ENCODE measurements at regions of chr2 and their contacts with region 1.

Region 1: DNA sequence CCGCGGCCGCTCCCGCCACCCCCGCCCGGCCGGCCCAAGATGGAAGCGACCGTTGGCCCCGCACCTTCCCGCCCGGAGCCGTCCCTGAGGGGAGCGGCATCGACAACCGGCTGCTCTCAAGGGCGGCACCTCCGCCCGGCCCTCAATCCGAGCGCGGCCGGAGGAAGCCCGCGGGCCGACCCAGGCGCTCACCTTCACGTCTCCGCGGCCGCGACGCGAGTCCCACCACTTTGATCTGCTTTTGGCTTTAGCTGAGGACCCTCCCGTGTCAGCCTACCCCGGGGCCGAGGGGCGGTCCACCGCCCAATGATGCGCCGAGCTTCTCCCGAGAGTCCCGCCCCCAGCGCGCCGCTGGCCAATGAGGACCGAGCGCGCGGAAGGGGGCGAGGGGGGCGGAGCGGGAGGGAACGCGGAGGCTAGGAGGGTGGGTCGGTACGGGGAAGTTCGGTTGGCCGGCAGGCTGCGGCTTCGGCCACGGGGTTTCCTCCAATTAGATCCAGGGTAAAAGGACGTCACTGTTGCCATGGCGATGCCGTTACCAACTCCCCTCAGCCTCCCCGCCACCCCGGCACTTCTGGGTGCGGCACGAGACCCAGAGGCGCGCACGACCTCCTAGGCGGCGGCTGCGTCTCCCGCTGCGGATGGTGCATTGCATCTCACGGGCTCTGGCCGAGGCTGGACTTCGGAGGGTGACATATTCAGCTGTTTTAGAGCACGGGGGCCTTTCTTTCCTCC is at the start of gene YWHAQ:
- DNase-seq: peak; percentile 99
- ATAC-seq: peak; percentile 91
- H3K4me3 Mint-ChIP-seq: peak within 1 kb of the TSS; percentile 99
- H3K27ac Mint-ChIP-seq: peak within 1 kb of the TSS; percentile 94
- H3K4me1 Mint-ChIP-seq: peaks cover 48% of the 10 kb centered on the region
- H3K27me3 Mint-ChIP-seq: peaks cover 8% of the 10 kb centered on the region
- total RNA-seq, gene YWHAQ: 300 to 316 TPM

Region 2: GRCh38 chr2:9613291-9613690 is 17.6 kb before region 1 on chr2:
- CTCF ChIA-PET with region 1: interaction called, 11 read pairs
- DNase-seq: no peak
- ATAC-seq: no peak
- H3K4me3 Mint-ChIP-seq: no peak overlapping the region
- H3K27ac Mint-ChIP-seq: no peak overlapping the region
- H3K4me1 Mint-ChIP-seq: peaks cover 86% of the 10 kb centered on the region
- H3K27me3 Mint-ChIP-seq: no peaks in the 10 kb centered on the region

Region 3: GRCh38 chr2:9618410-9618809 is 12.5 kb before region 1 on chr2:
- CTCF ChIA-PET with region 1: interaction called, 11 read pairs
- DNase-seq: peak; percentile 75
- ATAC-seq: peak; percentile 95
- H3K4me3 Mint-ChIP-seq: peak overlapping the region; percentile 62
- H3K27ac Mint-ChIP-seq: peak overlapping the region; percentile 85
- H3K4me1 Mint-ChIP-seq: peaks cover 87% of the 10 kb centered on the region
- H3K27me3 Mint-ChIP-seq: no peaks in the 10 kb centered on the region

Region 4: DNA sequence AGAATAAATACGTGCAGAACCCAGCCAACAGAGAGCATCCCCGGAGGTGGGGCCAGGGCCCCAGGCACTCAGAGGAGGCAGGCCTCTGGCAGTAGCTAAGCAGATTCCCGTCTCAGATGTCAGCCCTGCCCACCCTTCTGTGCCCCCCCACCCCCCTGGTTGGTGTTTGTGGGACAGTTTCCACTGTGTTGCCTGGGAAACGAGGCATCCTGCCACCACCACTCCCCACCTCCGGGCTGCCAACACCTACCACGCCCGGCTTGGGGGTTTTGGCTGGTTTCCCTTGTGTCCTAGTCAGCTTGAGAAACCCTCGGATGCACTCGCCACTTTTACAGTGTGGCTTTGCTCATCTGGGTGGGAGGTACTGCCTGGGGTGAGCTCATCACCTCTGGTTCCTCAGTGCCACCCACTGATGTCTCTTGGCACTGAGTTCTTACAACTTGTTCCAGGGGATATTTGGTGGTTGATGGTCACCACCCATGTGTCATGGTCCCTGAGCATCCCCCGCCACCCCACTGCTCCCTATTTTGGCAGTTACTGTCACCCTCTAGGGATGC is 72.2 kb after region 1 on chr2:
- CTCF ChIA-PET with region 1: interaction called, 15 read pairs
- DNase-seq: peak; percentile 96
- ATAC-seq: peak; percentile 94
- H3K4me3 Mint-ChIP-seq: no peak overlapping the region
- H3K27ac Mint-ChIP-seq: peak overlapping the region; percentile 84
- H3K4me1 Mint-ChIP-seq: peaks cover 61% of the 10 kb centered on the region
- H3K27me3 Mint-ChIP-seq: no peaks in the 10 kb centered on the region

Region 5: GRCh38 chr2:9770308-9771100 is 139.6 kb after region 1 on chr2:
- CTCF ChIA-PET with region 1: interaction called, 16 read pairs
- DNase-seq: peak; percentile 78
- ATAC-seq: peak; percentile 78
- H3K4me3 Mint-ChIP-seq: no peak overlapping the region
- H3K27ac Mint-ChIP-seq: peak overlapping the region; percentile 15
- H3K4me1 Mint-ChIP-seq: peaks cover 18% of the 10 kb centered on the region
- H3K27me3 Mint-ChIP-seq: no peaks in the 10 kb centered on the region

Region 6: GRCh38 chr2:10079234-10079869 is 448.4 kb after region 1 on chr2:
- CTCF ChIA-PET with region 1: no interaction called
- DNase-seq: no peak
- ATAC-seq: peak; percentile 41
- H3K4me3 Mint-ChIP-seq: peak overlapping the region; percentile 61
- H3K27ac Mint-ChIP-seq: no peak overlapping the region
- H3K4me1 Mint-ChIP-seq: peaks cover 11% of the 10 kb centered on the region
- H3K27me3 Mint-ChIP-seq: peaks cover 81% of the 10 kb centered on the region